WTC11 (cell line): ENCODE measurements at regions of chr10 and their contacts with region 1.

Region 1: DNA sequence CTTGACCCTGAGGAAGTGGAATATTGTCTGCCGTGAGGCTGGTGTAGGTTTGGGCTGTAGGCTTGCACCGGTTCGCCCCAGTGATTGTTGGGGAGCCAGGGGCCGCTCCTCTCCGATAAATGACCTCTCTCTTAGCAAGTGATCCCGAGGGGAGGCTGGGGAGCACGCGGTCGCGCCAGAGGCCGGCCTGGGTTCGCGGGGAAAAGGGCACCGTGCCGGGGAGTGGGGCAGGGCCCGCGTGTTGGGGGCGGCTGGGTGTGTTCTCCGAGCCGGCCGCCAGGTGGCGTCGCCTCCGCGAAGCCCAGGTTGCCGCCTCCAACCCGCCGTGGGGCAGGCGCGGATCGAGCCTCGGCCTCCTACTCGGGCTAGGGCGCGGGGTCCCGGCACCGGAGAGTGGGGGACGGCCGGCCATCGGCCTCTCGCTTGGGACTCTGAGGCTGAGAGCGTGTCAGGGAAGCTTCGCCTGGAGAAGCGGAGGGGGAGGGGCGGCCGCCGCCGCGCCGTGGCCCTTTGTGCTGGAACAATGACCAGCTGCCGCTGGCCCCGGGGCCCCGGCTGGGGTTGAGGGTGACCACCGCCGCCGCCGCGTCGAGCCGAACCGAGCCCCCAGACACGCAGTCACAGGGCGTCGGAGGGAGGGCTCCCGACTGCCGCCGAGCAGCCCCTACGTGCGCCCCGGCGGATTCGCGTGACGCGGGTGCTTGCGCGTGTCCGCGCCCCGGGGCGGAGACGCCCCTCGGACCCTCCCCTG is 442 bp upstream of the LZTS2 start:
- DNase-seq: peak; percentile 73
- ATAC-seq: peak; percentile 4
- H3K4me3 Mint-ChIP-seq: peak overlapping the region; percentile 83
- H3K27ac Mint-ChIP-seq: peak overlapping the region; percentile 95
- H3K4me1 Mint-ChIP-seq: peaks cover 32% of the 10 kb centered on the region
- H3K27me3 Mint-ChIP-seq: no peaks in the 10 kb centered on the region
- CTCF ChIP-seq: peak; percentile 97

Region 2: DNA sequence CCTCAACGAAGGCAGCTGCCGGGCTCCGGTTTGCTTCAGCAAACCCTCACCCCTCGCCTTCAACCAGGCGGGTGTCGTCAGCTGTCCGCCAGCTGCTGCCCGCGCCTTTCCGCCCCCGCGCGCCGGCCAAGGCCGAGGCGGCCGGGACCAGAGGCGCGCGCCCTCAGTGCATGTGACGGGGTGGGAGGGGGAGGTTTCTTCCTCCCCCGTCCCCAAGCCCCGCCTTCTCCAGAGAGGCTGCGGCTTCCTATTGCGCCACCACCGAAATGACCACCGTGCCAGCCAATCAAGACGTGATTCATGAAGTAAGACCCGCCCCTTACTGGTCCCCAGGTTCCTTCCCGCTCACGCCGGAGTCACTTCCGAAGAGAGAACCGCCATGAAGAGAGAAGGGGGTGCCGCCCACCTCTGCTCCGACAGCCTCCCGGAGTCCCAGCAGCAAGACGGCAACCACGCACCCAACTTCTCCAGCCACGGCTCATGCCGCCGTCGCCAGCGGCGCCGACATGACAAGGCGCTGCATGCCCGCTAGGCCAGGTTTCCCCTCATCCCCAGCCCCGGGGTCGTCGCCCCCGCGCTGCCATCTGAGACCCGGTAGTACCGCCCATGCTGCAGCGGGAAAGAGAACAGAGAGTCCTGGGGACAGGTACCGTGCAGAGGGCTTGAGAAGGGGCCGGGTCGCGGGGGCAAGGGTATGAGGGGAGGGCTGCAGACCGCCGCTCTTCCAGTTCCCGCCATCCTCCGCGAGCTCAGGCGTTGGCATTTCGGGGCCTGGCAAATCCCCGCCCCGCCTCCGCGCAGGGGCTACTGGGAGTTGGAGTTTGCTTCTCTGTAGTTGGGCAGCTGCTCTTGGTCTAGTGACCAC is 86.3 kb before region 1 on chr10 and contains the start of gene SLF2:
- CTCF ChIA-PET with region 1: interaction called, 11 read pairs
- POLR2A ChIA-PET with region 1: no interaction called
- DNase-seq: peak; percentile 96
- ATAC-seq: peak; percentile 97
- H3K4me3 Mint-ChIP-seq: peak within 1 kb of the TSS; percentile 96
- H3K27ac Mint-ChIP-seq: peak within 1 kb of the TSS; percentile 96
- H3K4me1 Mint-ChIP-seq: peaks cover 32% of the 10 kb centered on the region
- H3K27me3 Mint-ChIP-seq: no peaks in the 10 kb centered on the region
- CTCF ChIP-seq: no peak
- total RNA-seq, gene SLF2: 14.3 to 17.3 TPM (median 16.8 TPM) in 3 replicates

Region 3: GRCh38 chr10:100969187-100970075 is 29.7 kb before region 1 on chr10 and contains the start of gene SEMA4G:
- CTCF ChIA-PET with region 1: interaction called, 30 read pairs
- POLR2A ChIA-PET with region 1: no interaction called
- DNase-seq: peak; percentile 76
- ATAC-seq: peak; percentile 84
- H3K4me3 Mint-ChIP-seq: peak within 1 kb of the TSS; percentile 74
- H3K27ac Mint-ChIP-seq: no peak within 1 kb of the TSS
- H3K4me1 Mint-ChIP-seq: peaks cover 31% of the 10 kb centered on the region
- H3K27me3 Mint-ChIP-seq: no peaks in the 10 kb centered on the region; the same call in 1 of the 2 replicates
- CTCF ChIP-seq: peak; percentile 59; the same call in 1 of the 2 replicates
- total RNA-seq, gene SEMA4G: 9.7 to 13.0 TPM (median 11.8 TPM) in 3 replicates

Region 4: DNA sequence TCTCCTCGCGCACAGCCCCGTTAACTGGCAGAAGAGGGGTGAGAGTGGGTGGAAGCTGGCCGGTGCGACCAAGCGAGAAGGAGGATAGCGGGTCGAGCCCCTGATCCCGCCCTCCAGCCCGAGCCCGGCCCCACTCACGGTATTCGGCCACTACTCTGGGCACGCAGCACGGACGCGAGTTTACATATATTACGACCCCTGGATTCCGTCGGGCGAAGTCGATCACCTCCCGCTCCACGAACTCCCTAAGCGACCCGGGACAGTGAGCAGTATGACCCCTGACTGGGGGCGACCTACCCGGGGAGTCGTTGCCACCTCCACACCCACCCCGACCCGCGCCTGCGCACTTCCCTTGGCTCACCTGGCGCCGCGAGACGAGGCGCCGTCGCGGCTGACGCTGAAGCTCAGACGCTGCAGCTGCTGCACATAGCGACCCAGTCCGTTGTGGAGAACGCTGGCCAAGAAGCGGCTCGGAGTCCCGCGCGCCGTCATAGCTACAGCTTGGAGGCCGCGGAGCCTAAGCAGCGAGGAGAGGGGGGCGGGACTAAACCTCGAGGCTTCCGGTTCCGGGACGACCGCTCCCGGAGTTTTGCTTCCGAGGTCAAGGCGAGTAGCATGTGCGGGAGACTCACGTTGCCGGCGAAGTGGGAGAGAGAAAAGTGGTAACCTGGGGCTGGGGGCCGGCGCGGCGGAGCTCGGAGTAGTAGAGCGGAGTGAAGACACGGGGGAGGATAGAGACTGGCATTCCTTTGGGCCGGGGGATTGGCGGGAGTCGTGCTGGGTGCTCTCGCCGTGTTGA is 12.0 kb before region 1 on chr10 and contains the starts of genes MRPL43 and TWNK:
- CTCF ChIA-PET with region 1: interaction called, 28 read pairs
- POLR2A ChIA-PET with region 1: interaction called, 5 read pairs
- DNase-seq: peak; percentile 88
- ATAC-seq: peak; percentile 86
- H3K4me3 Mint-ChIP-seq: peak within 1 kb of the TSS; percentile 93
- H3K27ac Mint-ChIP-seq: peak within 1 kb of the TSS; percentile 93
- H3K4me1 Mint-ChIP-seq: peaks cover 13% of the 10 kb centered on the region
- H3K27me3 Mint-ChIP-seq: no peaks in the 10 kb centered on the region
- CTCF ChIP-seq: no peak
- total RNA-seq, gene MRPL43: 81.0 to 91.3 TPM (median 85.9 TPM) in 3 replicates
- total RNA-seq, gene TWNK: 24.5 to 28.2 TPM (median 26.2 TPM) in 3 replicates

Region 5: DNA sequence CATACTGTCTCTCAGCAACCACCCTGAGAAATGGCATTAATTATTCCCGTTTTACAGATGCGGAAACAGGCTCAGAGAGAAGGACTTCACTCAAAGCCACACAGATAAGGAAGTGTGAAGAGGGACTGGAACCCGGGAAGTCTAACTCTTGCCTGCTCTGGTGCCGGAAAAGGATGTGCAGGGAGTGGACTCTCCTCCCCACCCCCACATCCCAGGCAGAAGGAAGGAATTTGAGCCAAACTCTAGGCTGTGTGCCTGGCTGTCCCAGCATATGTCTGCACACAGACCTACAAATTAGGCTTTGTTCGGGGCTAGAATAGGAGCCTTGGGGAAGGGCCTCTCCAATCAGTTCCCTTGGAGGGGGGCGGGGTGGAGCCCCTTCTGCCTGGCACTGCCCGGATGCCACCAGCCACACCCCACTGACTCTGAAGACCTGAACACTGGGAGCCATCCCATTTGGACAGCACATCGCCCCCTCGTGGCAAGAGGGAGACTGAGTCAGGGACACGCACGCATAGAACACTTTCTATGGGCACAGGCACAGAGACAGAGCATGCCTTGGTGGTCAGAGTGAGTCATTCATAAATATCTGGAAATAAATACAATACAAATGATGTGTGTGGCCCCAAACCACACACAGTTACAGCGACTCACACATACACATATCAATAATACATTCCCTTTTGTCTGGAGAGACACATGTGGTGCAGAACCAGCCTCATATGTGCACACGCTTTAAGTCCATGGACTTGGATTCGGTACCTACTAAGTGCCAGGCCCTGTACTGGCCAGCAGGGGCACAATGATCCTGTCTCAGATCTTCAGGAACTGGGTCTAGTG is 13.6 kb after region 1 on chr10:
- CTCF ChIA-PET with region 1: interaction called, 277 read pairs
- POLR2A ChIA-PET with region 1: interaction called, 14 read pairs
- DNase-seq: peak; percentile 84
- ATAC-seq: peak; percentile 68
- H3K4me3 Mint-ChIP-seq: no peak overlapping the region
- H3K27ac Mint-ChIP-seq: no peak overlapping the region
- H3K4me1 Mint-ChIP-seq: peaks cover 33% of the 10 kb centered on the region
- H3K27me3 Mint-ChIP-seq: peaks cover 34% of the 10 kb centered on the region
- CTCF ChIP-seq: peak; percentile 63

Region 6: DNA sequence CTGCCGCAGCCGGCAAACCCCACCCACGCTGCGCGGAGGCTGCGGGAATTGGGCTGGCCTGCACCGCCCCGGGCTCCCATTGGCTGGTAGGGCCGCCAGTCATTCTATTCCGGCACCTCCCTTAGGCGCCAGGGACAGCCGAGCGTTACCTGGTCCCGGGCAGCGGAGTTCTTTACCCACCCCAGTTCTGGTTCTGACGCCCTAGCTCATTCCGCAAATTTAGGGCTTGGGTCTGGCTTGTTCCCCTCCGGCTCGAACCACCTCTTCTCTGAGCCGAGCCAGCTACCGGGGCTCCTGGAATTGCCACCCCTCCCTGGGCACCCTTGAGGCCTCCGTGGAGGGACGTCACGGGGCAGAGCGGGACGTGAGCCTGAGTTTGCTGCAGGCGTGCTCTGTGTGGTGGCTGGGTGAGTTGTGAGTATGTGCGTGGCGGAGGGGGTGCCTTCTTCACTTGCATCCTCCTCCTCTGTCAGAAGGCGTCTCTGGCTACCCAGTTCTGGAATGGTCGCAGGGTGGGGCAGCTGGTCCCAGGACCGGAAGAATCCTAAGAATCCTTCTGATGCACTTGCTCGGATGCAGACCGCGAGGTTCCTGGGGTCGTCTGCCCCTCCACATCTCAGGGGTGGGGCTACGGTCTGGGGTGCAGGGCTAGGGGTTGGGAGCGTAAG is 32.1 kb after region 1 on chr10 and contains the starts of genes PDZD7 and SFXN3:
- CTCF ChIA-PET with region 1: interaction called, 45 read pairs
- POLR2A ChIA-PET with region 1: interaction called, 5 read pairs
- DNase-seq: peak; percentile 97
- ATAC-seq: peak; percentile 88
- H3K4me3 Mint-ChIP-seq: peak within 1 kb of the TSS; percentile 75
- H3K27ac Mint-ChIP-seq: no peak within 1 kb of the TSS
- H3K4me1 Mint-ChIP-seq: peaks cover 36% of the 10 kb centered on the region
- H3K27me3 Mint-ChIP-seq: peaks cover 55% of the 10 kb centered on the region
- CTCF ChIP-seq: no peak
- total RNA-seq, gene PDZD7: 1.9 to 2.7 TPM (median 2.6 TPM) in 3 replicates
- total RNA-seq, gene SFXN3: 2.5 to 5.6 TPM (median 3.2 TPM) in 3 replicates

Region 7: GRCh38 chr10:101189541-101190401 is 190.6 kb after region 1 on chr10:
- CTCF ChIA-PET with region 1: no interaction called
- POLR2A ChIA-PET with region 1: no interaction called
- DNase-seq: peak; percentile 55
- ATAC-seq: peak; percentile 87
- H3K4me3 Mint-ChIP-seq: peak overlapping the region; percentile 24; the same call in 1 of the 2 replicates
- H3K27ac Mint-ChIP-seq: peak overlapping the region; percentile 55
- H3K4me1 Mint-ChIP-seq: peaks cover 24% of the 10 kb centered on the region
- H3K27me3 Mint-ChIP-seq: peaks cover 4% of the 10 kb centered on the region; the same call in 1 of the 2 replicates
- CTCF ChIP-seq: no peak